ENCODE measurements at regions of chr4 and their contacts with region 1.

Region 1: GRCh38 chr4:75673027-75673958 is at the start of gene G3BP2:
- DNase-seq: peak; percentile 89 to 99 (median 97)
- ATAC-seq: peak; percentile 90 to 91
- H3K4me3 Mint-ChIP-seq: peak within 1 kb of the TSS; percentile 95 to 100 (median 99)
- H3K27ac Mint-ChIP-seq: peak within 1 kb of the TSS; percentile 97 to 100 (median 99)
- H3K4me1 Mint-ChIP-seq: peaks cover 41 to 48% (median 46%) of the 10 kb centered on the region in 4 donors
- H3K27me3 Mint-ChIP-seq: no peaks in the 10 kb centered on the region
- polyA plus RNA-seq, gene G3BP2: 116 to 125 (median 121) TPM

Region 2: DNA sequence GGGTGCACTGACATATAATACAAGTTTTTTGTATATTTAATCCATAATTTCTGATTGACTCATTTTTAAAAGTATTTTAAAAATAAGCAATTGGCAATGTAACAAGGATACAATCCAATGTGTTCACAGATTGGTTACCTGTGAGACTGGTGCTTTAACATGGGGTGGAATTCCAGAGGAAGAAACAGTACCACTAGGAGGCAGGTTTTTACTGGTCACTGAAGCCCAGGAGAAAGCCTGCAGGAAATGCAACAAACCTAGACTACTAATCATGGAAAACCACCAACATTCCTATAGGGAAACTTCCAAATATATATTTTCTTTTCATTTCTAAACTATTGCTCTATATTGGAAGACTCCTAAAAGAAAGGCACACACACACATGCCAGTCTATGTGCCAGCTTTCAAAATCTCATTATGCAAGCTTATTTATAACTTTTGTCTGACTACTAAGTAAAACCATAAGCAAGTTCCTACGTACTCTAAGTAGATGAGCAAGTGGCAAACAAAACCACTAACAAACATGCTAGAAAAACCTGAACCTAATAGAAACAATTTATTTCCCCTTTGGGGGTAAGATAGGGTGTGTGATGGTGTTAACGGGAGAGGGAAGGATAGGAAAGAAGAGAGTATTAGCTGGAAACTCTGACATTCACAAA is 19.3 kb before region 1 on chr4:
- POLR2A ChIA-PET with region 1: interaction called, 28 read pairs
- DNase-seq: peak in 1 of 10 donors; percentile 38
- ATAC-seq: peak in 1 of 2 donors; percentile 6
- H3K4me3 Mint-ChIP-seq: peak overlapping the region in 8 of 10 donors; percentile 0 to 84 (median 30)
- H3K27ac Mint-ChIP-seq: peak overlapping the region; percentile 63 to 98 (median 88)
- H3K4me1 Mint-ChIP-seq: peaks cover 25 to 63% (median 49%) of the 10 kb centered on the region in 4 donors
- H3K27me3 Mint-ChIP-seq: no peaks in the 10 kb centered on the region

Region 3: GRCh38 chr4:75686346-75686745 is 13.1 kb after region 1 on chr4:
- POLR2A ChIA-PET with region 1: interaction called, 74 read pairs
- DNase-seq: peak in 8 of 10 donors; percentile 12 to 66 (median 41)
- ATAC-seq: peak; percentile 74 to 85
- H3K4me3 Mint-ChIP-seq: peak overlapping the region in 9 of 10 donors; percentile 5 to 78 (median 52)
- H3K27ac Mint-ChIP-seq: peak overlapping the region; percentile 28 to 91 (median 76)
- H3K4me1 Mint-ChIP-seq: peaks cover 20 to 56% (median 50%) of the 10 kb centered on the region in 4 donors
- H3K27me3 Mint-ChIP-seq: no peaks in the 10 kb centered on the region

Measured in naive thymus-derived CD8-positive, alpha-beta T cell (primary cell).